A673 (cell line): ENCODE measurements at regions of chr12 and their contacts with region 1.

Region 1: GRCh38 chr12:109385339-109386067 is 37.8 kb downstream of the MYO1H start:
- DNase-seq: peak; percentile 59
- H3K4me3 ChIP-seq: no peak overlapping the region
- H3K27ac ChIP-seq: no peak overlapping the region
- H3K4me1 ChIP-seq: no peaks in the 10 kb centered on the region
- H3K27me3 ChIP-seq: peaks cover 5% of the 10 kb centered on the region
- CTCF ChIP-seq: peak; percentile 63

Region 2: DNA sequence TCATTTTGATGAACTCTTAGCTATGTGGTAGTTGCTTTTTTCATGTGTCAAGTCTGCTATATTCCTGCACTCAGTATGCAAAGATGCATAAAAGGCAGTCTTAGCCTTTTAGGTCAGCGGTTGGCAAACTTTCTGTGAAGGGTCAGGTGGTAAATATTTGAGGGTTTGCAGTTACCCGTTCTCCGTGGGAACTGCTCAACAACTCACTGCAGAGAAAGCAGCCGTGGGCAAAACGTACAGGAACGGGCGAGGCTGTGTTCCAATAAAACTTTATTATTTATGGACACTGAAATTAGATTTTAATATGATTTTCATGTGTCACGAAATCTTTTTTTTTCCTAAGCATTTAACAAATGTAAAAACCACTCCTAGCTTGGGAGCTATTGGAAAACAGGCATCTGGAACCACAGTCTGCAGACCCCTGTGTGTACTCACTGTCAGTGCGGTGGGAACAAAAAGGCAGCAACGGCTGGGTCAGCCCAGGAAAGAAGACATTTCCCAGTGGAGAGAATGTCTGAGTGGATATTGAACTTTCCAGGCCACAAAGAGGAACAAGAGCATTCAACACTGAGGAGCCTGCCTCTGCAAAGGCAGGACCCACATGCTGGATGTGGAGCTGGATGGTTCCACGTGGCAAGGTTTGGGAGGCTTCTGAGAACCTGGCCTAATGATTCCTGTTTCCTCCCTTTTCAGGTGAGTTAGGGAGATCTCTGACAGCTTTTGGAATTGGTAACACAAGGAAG is 272.6 kb before region 1 on chr12:
- CTCF ChIA-PET with region 1: interaction called, 3 read pairs
- POLR2A ChIA-PET with region 1: no interaction called
- intact Hi-C with region 1: loop called (anchors 1 kb)
- DNase-seq: no peak
- H3K4me3 ChIP-seq: no peak overlapping the region
- H3K27ac ChIP-seq: no peak overlapping the region
- H3K4me1 ChIP-seq: peaks cover 9% of the 10 kb centered on the region
- H3K27me3 ChIP-seq: no peaks in the 10 kb centered on the region
- CTCF ChIP-seq: no peak

Region 3: DNA sequence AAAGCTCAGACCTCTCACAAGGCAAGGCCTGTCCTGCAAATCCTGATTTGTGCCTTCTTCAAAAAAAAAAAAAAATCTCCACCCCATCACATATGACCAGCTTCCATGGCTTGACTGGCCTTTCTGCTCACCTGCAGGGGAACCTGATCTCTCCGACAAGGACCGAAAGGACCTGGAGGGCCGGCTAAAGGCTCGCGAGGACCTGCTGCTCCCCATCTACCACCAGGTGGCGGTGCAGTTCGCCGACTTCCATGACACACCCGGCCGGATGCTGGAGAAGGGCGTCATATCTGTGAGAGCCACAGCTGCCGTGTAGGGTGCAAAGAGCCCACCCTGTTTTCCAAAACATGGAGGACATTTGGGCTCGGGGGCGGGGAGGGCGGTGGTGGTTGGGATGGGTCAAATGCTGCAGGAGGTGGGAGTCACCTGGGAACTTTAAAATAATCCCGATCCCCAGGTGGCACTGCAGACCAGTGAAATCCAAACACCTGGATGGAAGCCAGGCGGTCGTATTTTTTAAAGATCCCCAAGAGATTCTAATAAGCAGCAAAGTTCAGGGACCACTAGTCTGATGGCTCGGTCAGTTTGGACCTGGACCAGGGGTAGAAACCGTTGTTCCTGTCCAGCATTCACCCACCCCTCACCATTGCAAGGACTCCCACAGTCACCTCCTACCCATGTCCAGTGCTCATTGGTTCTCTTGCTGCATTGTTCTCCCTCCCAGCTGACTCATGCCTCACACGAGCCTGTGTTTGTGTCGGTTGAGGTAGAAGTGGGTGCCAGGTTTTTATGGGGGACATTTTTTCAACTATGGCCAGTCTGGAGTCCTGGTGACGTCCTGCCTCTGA is 121.2 kb before region 1 on chr12:
- CTCF ChIA-PET with region 1: interaction called, 26 read pairs
- POLR2A ChIA-PET with region 1: no interaction called
- intact Hi-C with region 1: loop called (anchors 1 kb)
- DNase-seq: peak; percentile 87
- H3K4me3 ChIP-seq: no peak overlapping the region
- H3K27ac ChIP-seq: no peak overlapping the region
- H3K4me1 ChIP-seq: no peaks in the 10 kb centered on the region
- H3K27me3 ChIP-seq: no peaks in the 10 kb centered on the region
- CTCF ChIP-seq: peak; percentile 92